Endothelial cell of umbilical vein (primary cell): ENCODE measurements at regions of chr7 and their contacts with region 1.

Region 1: DNA sequence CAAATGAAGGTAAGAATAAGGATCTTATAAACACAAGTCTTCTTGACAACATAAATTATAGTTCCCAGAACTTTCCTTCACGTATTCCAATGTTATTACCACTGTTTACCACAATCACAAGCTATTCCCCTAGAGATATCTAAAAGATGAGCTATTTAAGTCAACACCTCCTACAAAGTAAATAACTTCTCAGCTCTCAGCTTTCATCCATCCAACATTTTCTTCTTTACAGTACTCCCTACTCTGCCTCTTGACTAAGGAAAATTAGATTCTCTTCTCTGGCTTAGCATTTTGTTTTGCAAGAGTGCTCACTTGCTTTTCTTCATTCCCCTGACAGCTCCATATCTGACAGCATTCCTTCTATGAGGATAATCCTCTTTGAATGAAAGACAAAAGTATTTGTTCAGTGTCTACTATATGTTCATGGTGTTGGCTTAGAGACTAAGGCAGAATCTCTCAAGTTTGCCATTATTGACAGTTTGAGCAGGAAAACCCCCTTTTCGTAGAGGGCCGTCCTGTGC is 93.0 kb upstream of the IL6 start:
- DNase-seq: no peak
- H3K4me3 ChIP-seq: no peak overlapping the region
- H3K27ac ChIP-seq: peak overlapping the region; percentile 92
- H3K4me1 ChIP-seq: peaks cover 41% of the 10 kb centered on the region
- H3K27me3 ChIP-seq: no peaks in the 10 kb centered on the region
- CTCF ChIP-seq: no peak
- POLR2A ChIP-seq: no peak

Region 2: DNA sequence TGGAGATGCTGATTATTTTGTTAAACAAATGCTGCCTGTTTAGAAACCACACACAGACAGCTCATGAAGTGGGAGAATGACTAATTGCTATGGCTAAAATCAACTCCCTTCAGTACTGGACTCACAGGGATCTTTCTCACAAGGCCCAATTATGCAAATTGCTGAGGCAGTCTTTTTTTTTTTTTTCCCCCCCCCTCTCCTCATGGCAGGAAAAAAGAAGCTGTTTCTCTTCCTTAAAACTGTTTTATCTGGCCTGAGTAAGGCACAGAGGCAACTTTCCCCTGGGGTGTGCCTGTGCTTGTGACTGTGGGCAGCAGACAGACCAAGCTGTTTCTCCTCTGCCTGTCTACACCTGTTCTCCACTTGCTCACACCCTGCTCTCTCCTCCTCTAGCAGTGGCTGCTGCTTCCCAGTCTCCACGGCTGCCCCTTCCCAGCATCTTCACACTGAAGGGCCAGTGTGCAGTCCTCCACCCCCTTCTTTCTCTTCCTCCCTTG is 68.7 kb before region 1 on chr7:
- CTCF ChIA-PET with region 1: interaction called, 7 read pairs
- POLR2A ChIA-PET with region 1: no interaction called
- dilution Hi-C with region 1: no loop called
- intact Hi-C with region 1: loop called (anchors 1 kb)
- DNase-seq: peak; percentile 69
- H3K4me3 ChIP-seq: peak overlapping the region in 1 of 3 experiments; percentile 70
- H3K27ac ChIP-seq: peak overlapping the region; percentile 99
- H3K4me1 ChIP-seq: peaks cover 72% of the 10 kb centered on the region
- H3K27me3 ChIP-seq: no peaks in the 10 kb centered on the region
- CTCF ChIP-seq: no peak
- POLR2A ChIP-seq: peak; percentile 41

Region 3: DNA sequence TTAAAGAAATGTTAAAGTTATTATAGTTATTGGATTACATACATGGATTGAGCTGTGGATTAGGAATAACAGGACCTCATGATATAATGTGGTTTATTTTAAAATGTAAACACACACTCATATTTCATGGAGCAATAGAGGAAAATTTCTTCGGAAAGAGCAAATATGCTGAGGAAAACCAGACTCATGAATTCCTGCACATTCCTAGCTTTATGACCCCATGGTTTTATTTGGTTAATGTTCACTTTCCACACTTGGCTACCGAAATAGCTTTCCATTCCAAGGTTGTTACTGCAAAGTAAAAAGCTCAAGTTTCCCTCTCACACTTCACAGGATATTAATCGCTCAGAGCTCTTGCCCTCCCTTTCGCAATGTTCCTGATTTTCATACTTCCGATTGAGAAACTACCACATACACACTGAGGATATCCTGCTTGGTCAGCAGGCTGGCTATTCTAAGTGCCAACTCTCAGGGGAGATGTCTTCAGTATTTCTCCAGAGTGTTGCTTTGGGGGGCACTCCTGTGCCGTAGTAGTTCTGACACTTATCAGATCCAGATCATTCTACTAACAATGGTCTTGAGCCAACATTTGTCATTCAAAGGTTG is 56.5 kb before region 1 on chr7:
- CTCF ChIA-PET with region 1: interaction called, 3 read pairs
- POLR2A ChIA-PET with region 1: no interaction called
- dilution Hi-C with region 1: no loop called
- intact Hi-C with region 1: loop called (anchors 1 kb)
- DNase-seq: peak; percentile 94
- H3K4me3 ChIP-seq: peak overlapping the region in 1 of 3 experiments; percentile 34
- H3K27ac ChIP-seq: peak overlapping the region; percentile 99
- H3K4me1 ChIP-seq: peaks cover 47% of the 10 kb centered on the region
- H3K27me3 ChIP-seq: no peaks in the 10 kb centered on the region
- CTCF ChIP-seq: no peak
- POLR2A ChIP-seq: peak; percentile 20

Region 4: GRCh38 chr7:22586786-22587140 is 47.3 kb before region 1 on chr7:
- CTCF ChIA-PET with region 1: interaction called, 7 read pairs
- POLR2A ChIA-PET with region 1: no interaction called
- dilution Hi-C with region 1: no loop called
- intact Hi-C with region 1: loop called (anchors 1 kb)
- DNase-seq: no peak
- H3K4me3 ChIP-seq: no peak overlapping the region
- H3K27ac ChIP-seq: peak overlapping the region; percentile 95
- H3K4me1 ChIP-seq: peaks cover 75% of the 10 kb centered on the region
- H3K27me3 ChIP-seq: no peaks in the 10 kb centered on the region
- CTCF ChIP-seq: peak; percentile 34 to 56
- POLR2A ChIP-seq: no peak

Region 5: DNA sequence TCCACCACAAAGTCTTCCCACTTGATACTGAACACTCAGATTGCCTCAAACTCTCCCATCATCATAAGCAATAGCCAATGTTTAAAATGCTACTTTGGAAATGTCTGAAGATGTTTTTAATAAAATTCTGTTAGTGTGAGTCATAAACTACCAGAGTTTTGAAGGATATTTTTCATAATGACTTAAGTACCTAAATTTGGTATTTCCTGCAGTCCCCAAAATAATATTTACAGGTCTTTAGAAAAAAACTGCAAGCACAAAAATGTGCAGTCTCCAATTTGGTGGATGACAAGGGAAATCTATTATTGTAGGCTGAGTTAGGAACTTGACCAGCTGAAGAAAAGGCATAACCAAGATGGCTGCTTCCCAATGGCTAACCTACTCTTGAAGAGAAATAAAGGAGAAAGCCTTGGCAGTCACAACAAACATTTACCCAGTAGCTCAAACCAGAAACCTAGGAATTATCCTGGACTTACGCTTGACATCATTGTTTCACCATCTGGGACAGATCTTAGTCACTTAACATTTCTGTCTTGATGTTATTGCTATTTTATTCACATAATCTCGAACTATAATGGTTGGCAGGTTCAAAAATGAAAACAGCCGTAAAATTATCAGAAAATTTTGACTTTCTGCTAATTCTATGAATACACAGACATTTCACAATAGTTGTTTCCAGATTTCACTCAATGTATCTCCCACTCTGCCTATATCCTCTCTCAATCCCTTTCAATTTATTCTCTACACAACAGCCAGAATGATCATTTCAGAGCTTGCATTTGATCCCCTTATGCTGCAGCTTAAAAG is 22.9 kb before region 1 on chr7:
- CTCF ChIA-PET with region 1: no interaction called
- POLR2A ChIA-PET with region 1: no interaction called
- dilution Hi-C with region 1: no loop called
- intact Hi-C with region 1: loop called (anchors 2 kb)
- DNase-seq: no peak
- H3K4me3 ChIP-seq: no peak overlapping the region
- H3K27ac ChIP-seq: peak overlapping the region; percentile 28
- H3K4me1 ChIP-seq: peaks cover 16% of the 10 kb centered on the region
- H3K27me3 ChIP-seq: no peaks in the 10 kb centered on the region
- CTCF ChIP-seq: no peak
- POLR2A ChIP-seq: no peak

Region 6: DNA sequence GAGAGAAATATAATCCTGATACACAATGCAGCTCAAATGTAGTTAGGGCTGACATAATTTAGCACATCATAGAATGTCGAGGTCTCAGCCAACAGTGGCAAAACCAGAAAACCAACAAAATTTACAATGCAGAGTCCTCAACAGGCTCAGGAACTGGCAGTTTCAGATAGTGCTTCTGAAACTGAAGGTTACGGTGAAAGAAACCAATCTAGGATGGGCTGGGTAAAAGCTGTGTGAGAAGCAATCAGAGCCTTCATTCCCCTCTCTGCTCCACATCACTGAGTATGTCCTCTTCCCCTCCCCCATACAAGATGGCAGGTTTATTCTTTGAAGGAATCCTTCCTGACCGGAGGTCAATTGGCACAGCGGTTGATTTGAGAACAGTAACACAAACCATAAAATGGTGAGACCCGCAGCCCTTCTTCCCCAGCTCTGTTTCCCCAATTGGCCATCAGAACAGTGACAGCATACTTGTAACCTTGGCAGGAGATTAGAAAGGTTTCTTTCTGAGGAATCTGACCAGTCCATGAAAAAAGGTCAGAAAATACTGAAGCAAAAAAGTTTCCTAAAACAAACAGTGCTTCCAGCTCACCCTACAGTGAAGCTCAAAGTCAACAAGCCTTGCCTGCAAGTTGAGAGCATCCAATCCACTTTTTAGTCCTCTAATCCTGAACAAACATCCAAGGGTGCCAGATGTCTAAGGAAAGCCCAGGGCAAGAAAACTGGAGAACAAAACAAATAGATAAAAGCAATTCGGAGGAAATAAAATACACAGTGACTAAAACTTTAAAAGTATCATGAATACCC is 39.0 kb after region 1 on chr7:
- CTCF ChIA-PET with region 1: no interaction called
- POLR2A ChIA-PET with region 1: no interaction called
- dilution Hi-C with region 1: no loop called
- intact Hi-C with region 1: loop called (anchors 2 kb)
- DNase-seq: no peak
- H3K4me3 ChIP-seq: no peak overlapping the region
- H3K27ac ChIP-seq: no peak overlapping the region
- H3K4me1 ChIP-seq: peaks cover 65% of the 10 kb centered on the region
- H3K27me3 ChIP-seq: no peaks in the 10 kb centered on the region
- CTCF ChIP-seq: no peak
- POLR2A ChIP-seq: no peak